AG04449 (cell line): ENCODE measurements at regions of chr10 and their contacts with region 1.

Region 1: DNA sequence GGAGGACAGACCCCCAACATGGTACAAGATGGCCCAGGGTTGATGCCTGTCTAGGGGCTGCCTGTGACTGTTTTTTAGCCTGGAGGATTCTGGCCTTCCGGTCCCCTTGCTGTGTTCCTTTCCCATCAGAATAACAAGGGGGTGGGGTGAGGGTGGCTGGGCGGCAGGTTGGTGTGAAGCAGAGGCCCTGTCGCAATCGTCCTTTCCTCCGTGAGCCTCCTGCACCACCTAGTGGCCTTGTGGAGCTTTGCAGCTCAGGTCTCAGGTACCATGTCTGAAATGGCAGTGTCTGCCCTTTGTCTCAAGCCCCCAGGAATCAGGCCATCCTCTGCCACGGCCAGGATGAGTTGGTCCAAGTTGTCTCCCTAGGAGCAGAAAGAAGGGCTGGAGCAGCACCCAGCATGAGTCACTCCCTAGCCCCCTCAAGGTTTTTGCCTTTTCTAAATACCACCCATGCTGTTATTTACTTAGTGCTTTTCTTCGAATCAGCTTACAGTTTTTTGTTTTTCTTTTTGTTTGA is 24.2 kb downstream of the TACR2 start:
- DNase-seq: no peak
- H3K4me3 ChIP-seq: no peak overlapping the region
- CTCF ChIP-seq: peak; percentile 99

Region 2: DNA sequence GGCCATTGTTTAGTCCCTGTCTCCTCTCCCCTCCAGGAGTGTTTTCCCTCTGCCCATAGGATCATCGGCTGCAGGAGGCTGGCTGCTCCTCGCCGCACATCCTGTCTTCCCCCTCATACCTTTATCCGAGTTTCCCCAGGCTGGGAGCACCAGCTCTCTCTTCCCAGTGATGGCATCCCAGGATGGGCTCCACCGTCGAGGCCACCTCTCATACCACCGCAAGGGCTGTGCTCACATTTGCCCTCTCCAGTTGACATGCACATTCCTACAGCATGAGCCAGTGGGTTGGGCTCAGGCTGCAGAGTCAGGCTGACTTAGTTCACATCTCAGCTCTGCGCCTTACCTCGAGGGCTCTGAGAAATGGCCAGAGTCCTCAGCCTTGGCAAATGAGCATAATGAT is 160.3 kb before region 1 on chr10:
- CTCF ChIA-PET with region 1: interaction called, 451 read pairs
- POLR2A ChIA-PET with region 1: no interaction called
- DNase-seq: peak; percentile 38
- H3K4me3 ChIP-seq: no peak overlapping the region
- CTCF ChIP-seq: no peak

Region 3: GRCh38 chr10:69237528-69238159 is 154.9 kb before region 1 on chr10:
- CTCF ChIA-PET with region 1: interaction called, 451 read pairs
- POLR2A ChIA-PET with region 1: no interaction called
- DNase-seq: no peak
- H3K4me3 ChIP-seq: no peak overlapping the region
- CTCF ChIP-seq: peak; percentile 78

Region 4: DNA sequence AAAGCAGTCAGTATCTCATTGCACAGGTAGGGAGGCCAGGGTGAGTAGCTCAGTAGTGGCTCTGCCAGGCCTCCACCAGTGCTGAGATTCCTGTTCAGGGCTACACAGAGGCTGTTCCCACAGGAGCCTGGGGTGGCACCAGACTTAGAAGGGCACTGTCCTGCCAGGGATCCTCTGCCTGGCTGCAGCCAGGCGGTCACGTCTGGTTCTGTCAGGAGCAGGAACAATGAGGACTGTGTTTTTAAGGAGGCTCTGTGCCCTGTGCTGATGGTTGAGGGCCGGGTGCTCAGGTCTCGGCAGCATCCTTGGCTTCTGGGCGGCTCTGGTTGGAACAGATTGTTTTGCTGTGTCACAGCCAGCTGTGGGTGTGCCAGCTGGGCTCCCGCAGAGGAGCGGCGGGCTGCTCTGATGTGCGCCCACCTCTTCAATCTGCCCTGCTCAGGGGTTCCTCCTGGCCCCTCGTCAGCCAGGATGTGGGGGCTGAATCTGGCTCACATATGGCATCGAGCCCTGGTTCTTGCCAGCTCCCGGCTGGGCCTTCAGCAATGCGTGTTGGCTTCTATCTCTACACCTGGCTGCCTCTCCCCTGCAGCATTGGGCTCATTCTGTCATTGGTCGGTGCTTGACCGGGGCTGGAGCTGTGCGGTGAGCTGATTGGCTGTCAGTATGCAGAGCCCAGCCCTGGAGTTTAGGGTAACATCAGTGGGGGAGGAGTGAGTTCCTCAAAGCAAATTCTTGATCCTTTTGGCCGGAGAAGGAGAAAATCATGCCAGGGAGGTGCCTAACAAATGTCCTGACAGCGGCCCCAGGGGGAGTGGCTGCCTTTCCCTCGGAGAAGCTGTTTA is 17.0 kb before region 1 on chr10:
- CTCF ChIA-PET with region 1: interaction called, 11 read pairs
- POLR2A ChIA-PET with region 1: no interaction called
- DNase-seq: no peak
- H3K4me3 ChIP-seq: no peak overlapping the region
- CTCF ChIP-seq: no peak

Region 5: GRCh38 chr10:69403519-69403918 is 11.0 kb after region 1 on chr10:
- CTCF ChIA-PET with region 1: interaction called, 40 read pairs
- POLR2A ChIA-PET with region 1: no interaction called
- DNase-seq: peak; percentile 31
- H3K4me3 ChIP-seq: no peak overlapping the region
- CTCF ChIP-seq: no peak